ENCODE measurements at regions of chr12 and their contacts with region 1.

Region 1: DNA sequence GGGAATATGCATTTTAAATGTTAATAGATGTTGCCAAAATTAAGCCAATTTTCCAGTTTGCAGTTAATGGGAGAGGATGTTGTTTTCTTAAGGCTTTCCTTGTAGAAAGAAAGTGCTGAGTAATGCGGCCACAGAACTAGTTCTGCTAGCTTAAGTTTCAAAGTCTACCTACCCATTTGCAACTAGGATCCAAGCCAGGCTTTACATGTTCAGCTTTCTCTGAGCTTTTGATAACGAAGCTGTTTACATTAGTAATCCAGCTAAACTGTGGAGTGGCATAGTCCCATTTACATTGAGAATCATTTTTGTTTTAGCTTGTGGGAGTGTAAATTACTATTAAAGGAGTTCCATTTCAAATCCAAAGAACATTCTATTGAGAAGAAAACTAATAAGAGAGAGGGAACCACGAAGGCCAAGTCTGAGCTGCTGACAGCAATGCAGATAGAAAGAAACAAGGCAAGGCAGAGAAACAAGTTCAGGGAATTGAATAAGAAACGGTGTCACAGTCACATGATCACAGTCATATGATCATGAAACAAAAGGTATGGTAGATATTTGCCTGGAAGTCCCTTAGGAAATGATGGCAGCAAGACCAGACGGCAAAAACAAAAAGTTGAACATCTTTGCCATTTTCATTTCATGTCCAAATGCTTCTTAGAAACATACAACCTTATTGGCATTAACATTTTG is 274.9 kb downstream of the PAWR start:
- DNase-seq: no peak
- ATAC-seq: no peak
- H3K4me3 ChIP-seq: no peak overlapping the region
- H3K27ac ChIP-seq: no peak overlapping the region
- H3K4me1 ChIP-seq: peaks cover 6% of the 10 kb centered on the region
- H3K27me3 ChIP-seq: no peaks in the 10 kb centered on the region
- CTCF ChIP-seq: no peak

Region 2: DNA sequence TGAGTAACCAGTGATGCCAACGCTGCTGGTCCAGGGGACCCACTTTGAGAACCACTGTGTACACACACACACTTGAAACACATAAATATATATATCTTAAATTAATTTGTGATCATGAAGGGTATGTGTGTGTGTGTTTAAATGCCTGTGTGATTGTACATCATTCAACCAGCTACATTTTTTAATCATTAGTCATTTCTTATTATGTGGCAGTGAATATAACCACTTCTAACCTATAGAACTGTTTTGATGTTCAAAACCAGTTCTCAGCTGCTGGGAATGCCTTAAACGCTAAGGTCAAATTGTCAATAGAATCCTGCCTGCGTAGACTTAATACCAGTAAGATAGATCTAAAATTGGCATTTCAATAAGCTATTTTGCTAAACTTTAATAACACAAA is 221.3 kb before region 1 on chr12:
- intact Hi-C with region 1: no loop called
- DNase-seq: no peak
- ATAC-seq: no peak
- H3K4me3 ChIP-seq: no peak overlapping the region
- H3K27ac ChIP-seq: no peak overlapping the region
- H3K4me1 ChIP-seq: no peaks in the 10 kb centered on the region
- H3K27me3 ChIP-seq: no peaks in the 10 kb centered on the region
- CTCF ChIP-seq: no peak

Region 3: DNA sequence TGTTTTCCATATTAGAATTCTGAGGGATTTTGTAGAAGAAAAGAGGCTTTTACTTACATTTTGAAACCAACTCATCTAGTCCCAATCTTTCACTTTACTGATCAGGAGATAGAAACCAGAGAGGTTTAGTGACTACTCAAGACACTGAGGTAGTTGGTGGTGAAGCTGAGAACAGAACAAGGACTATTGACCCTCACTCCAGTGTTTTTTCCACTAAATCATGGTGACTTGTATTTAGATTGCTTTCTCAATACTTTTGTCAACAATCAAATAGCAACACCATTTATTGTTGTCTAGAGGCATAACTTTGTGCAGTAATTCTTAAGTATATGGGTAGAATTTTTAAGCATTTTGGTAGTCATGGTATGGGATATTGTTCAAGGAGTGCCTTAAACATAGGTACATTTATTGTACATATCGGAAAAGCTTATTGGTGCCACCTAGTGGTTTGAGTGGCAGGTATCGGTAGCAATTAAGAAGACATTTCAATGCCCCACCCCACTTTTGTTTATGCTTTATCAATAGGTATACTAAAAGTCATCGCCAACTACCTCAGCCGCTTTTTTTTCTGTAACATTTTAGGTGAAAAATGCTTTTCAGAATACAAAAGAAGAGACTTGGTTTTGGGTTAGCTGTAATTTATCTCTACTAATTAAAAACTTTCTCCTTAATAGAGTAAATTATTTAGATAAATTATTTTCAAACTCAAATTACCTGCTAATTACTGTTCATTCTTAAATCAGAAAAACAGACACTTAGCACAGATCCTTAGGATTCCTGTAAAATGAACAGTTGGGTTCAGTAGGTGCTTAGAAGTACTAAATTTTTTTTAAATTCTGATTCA is 322.2 kb after region 1 on chr12:
- intact Hi-C with region 1: loop called (anchors 10 kb)
- DNase-seq: no peak
- ATAC-seq: peak; percentile 69
- H3K4me3 ChIP-seq: no peak overlapping the region
- H3K27ac ChIP-seq: no peak overlapping the region
- H3K4me1 ChIP-seq: no peaks in the 10 kb centered on the region
- H3K27me3 ChIP-seq: no peaks in the 10 kb centered on the region
- CTCF ChIP-seq: peak; percentile 75

Measured in upper lobe of right lung (tissue), 1 donor.